Activated CD8-positive, alpha-beta T cell treated with anti-CD3 and anti-CD28 coated beads, Interleukin-2, amount 10 ng/mL, durations not matched to agents 7 days and 5 days (primary cell): ENCODE measurements at regions of chr4 and their contacts with region 1.

Region 1: DNA sequence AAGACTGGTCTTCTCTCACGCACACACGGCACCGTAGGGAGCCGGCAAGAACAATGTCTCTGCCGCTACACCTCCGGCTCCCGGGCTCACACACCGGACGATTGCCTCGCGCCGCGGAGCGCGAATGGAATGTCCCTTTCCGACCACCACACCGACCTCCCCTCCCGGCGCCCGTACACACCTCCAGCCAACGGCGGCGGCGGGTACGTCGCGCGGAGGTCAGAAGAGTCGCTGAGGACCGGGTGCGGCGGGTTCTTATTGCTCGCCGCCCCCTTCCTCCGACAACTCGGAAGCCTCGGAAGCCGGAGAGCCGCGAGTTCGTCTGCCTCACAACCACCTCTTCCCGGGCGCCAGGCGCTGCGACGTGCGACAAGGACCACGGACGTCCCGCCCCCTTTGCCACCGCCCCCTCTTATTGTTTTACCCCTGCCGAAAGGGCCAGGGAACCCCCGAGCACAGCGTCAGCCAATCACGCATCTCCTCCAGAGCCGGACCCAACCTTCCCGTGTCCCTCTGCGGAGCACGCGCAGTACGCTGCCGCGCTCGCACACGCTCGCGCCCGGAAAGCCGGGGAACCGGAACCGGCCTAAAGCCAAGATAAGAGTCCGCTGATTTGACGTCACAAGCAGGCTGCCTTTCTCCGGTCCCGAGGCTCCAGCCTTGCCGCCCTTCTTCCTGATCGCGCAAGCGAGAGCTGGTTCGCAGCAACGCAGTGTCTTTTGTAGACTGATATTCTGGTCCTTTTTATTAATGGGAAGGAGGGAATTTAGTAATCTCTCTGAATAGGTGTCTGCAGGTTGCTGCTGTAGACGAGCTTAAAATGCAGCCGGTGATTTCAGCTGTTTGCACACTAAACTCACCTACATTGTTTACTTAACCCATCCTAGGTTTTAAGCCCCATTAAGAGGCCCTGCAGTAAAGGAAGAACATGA is at the start of gene G3BP2:
- DNase-seq: peak; percentile 99
- ATAC-seq: peak; percentile 94
- H3K4me3 Mint-ChIP-seq: peak within 1 kb of the TSS; percentile 99
- H3K27ac Mint-ChIP-seq: peak within 1 kb of the TSS; percentile 99
- H3K4me1 Mint-ChIP-seq: peaks cover 46% of the 10 kb centered on the region
- H3K27me3 Mint-ChIP-seq: no peaks in the 10 kb centered on the region
- total RNA-seq, gene G3BP2: 173 to 178 TPM

Region 2: DNA sequence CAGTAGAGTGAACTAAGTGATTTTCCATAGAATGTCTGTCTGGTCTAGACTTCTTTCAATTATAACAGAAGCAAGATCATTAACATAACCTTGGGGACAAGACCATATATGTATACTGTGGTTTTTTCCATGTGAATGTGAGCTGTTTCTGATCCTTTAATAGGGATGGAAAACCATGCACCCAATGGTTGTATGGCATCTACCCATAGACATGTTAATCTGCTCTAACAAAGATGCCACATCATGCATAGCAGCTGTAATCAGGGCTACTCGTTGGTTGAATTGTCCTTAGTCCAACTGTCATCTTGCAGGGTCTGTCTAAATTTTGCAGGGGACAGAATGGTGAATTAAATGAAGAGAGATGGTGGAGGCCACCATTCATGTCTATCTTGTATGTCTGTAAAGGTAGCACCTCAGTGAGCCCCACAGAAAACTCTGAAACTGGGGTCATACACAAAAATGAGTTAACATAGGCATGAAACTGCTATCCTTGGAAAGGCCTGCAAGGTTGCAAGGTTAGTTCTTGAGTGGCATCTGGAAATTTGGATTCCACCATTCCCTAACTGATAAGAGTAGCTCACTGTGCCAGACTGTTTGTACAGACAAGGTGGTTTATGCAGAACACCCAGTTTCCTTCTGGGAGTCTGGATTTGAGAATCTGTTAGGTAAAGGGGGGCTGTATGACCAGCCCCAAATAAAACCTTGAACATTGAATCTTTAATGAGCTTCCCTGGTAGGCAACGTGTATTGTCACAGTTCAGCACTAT is 142.6 kb before region 1 on chr4:
- CTCF ChIA-PET with region 1: no interaction called
- POLR2A ChIA-PET with region 1: no interaction called
- DNase-seq: no peak
- ATAC-seq: no peak
- H3K4me3 Mint-ChIP-seq: no peak overlapping the region
- H3K27ac Mint-ChIP-seq: no peak overlapping the region
- H3K4me1 Mint-ChIP-seq: no peaks in the 10 kb centered on the region
- H3K27me3 Mint-ChIP-seq: no peaks in the 10 kb centered on the region

Region 3: GRCh38 chr4:75686346-75686745 is 13.1 kb after region 1 on chr4:
- CTCF ChIA-PET with region 1: interaction called, 9 read pairs
- POLR2A ChIA-PET with region 1: interaction called, 52 read pairs
- DNase-seq: peak; percentile 31
- ATAC-seq: peak; percentile 50
- H3K4me3 Mint-ChIP-seq: no peak overlapping the region
- H3K27ac Mint-ChIP-seq: peak overlapping the region; percentile 72
- H3K4me1 Mint-ChIP-seq: peaks cover 43% of the 10 kb centered on the region
- H3K27me3 Mint-ChIP-seq: no peaks in the 10 kb centered on the region

Region 4: DNA sequence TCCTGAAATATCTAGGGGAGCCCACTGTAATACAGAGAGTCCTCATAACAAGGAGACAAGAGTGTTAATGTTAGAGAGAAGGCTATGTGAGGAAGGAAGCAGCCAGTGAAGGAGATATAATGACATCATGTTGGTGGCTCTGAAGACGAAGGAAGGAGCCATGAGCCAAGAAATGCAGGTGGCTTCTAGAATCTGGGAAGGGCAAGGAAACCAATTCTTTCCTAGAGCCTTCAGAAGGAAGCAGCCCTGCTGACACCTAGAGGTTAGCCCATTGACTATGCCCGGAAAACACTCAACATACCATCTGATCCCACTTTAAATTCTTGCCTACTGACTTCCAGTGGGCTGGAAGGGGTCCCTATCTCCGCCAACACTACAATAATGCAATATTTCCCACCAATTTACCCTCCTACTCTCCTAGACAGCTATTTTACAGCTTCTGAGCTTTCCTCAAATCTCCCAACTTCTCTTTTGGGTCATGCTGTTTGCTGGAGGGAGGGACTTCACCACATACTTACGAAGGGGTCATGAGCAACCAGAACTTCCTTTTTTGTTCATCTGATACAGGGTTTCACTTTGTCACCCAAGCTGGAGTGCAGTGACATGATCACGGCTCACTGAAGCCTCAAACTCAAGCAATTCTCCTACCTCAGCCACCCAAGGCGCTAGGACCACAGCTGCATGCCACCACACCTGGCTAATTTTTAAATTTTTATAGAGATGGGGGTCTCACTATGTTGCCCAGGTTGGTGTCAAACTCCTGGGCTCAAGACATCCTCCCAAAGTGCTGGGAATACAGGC is 25.1 kb after region 1 on chr4:
- CTCF ChIA-PET with region 1: interaction called, 11 read pairs
- POLR2A ChIA-PET with region 1: interaction called, 15 read pairs
- DNase-seq: peak; percentile 54
- ATAC-seq: peak; percentile 71
- H3K4me3 Mint-ChIP-seq: peak overlapping the region; percentile 39
- H3K27ac Mint-ChIP-seq: peak overlapping the region; percentile 85
- H3K4me1 Mint-ChIP-seq: peaks cover 40% of the 10 kb centered on the region
- H3K27me3 Mint-ChIP-seq: no peaks in the 10 kb centered on the region